Caco-2 (cell line): ENCODE measurements at regions of chr20 and their contacts with region 1.

Region 1: DNA sequence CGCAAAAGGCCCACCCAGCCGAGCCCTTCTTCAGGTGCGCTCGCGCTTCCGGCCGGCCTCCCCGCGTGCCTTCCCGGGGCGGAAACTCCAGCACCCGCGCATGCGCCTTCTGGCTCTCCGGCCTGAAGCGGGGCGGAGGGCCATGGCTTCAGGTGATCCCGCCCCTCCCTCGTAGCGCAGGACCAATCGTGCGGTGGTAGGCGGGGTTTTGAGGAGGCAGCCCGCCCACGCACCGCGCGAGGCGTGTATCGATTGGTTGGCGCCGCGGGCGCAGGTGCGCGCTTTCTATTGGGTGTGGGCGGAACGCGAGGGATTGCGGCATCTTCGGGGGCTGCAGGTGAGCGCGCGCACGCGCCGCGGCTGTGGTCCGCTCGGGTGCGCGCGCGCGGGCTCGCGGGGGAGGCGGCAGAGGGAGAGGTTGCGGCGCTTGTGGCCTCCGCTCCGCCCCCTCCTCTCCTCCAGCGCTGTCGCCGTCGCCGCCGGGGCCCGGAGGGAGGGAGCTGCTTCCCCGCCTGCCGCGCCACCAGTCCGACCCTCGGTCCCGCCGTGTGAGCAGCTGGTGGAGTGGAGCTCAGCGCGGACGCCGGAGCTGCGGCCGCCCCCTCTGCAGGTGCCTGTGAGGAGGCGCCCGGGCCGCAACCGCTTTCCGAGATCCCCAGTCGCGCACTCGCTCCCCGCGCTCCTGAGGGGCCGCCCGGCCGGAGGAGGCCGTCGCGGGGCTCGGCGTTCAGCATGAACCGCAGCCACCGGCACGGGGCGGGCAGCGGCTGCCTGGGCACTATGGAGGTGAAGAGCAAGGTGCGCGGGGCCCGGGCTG is at the start of gene PARD6B:
- DNase-seq: peak; percentile 100
- H3K4me3 ChIP-seq: peak within 1 kb of the TSS; percentile 78
- H3K4me3 Mint-ChIP-seq: peak within 1 kb of the TSS; percentile 88
- H3K27ac Mint-ChIP-seq: peak within 1 kb of the TSS; percentile 96
- H3K4me1 ChIP-seq: peaks cover 67% of the 10 kb centered on the region
- H3K4me1 Mint-ChIP-seq: peaks cover 46% of the 10 kb centered on the region
- H3K27me3 ChIP-seq: no peaks in the 10 kb centered on the region
- H3K27me3 Mint-ChIP-seq: no peaks in the 10 kb centered on the region
- CTCF ChIP-seq: peak in 1 of 2 experiments; percentile 19
- total RNA-seq, gene PARD6B: 153 and 156 TPM in 2 replicates

Region 2: DNA sequence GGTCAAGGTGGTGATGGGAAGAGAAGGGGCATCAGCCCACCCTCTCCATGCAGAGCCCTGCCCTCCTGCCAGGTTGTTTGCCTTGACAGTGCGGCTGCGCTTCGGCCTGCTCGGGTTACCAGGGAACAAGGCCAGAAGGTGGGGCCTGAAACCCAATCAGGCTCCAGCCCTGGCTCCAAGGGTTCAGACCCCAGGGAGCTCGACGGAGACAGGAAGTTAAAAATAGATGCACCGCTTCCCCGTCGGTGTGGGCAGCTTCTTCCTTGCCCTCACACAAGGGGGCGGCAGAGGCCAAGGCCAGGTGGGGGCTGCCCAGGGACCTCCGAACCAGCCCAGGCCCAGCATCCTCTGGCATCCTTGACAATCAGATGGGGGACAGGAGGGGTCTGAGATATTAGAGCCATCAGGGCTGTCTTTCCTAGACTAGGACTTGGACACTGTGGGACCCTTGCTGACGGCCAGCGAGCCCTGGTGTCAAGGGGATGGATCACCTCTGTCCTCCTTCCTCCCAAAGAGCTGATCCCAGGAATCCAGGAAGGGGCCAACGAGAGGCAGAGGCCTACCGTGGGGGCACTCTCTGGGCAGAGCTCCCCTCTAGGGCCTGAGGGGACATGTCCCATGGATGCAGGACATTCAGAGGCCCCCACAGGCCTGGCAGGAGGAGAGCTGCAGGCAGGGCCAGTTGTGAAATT is 105.1 kb before region 1 on chr20:
- CTCF ChIA-PET with region 1: interaction called, 4 read pairs
- POLR2A ChIA-PET with region 1: interaction called, 10 read pairs
- intact Hi-C with region 1: no loop called
- DNase-seq: peak; percentile 85 to 91
- H3K4me3 ChIP-seq: no peak overlapping the region
- H3K4me3 Mint-ChIP-seq: no peak overlapping the region
- H3K27ac Mint-ChIP-seq: peak overlapping the region; percentile 23
- H3K4me1 ChIP-seq: peaks cover 41% of the 10 kb centered on the region
- H3K4me1 Mint-ChIP-seq: peaks cover 12% of the 10 kb centered on the region
- H3K27me3 ChIP-seq: no peaks in the 10 kb centered on the region
- H3K27me3 Mint-ChIP-seq: no peaks in the 10 kb centered on the region
- CTCF ChIP-seq: peak; percentile 96 to 97

Region 3: GRCh38 chr20:50670126-50670862 is 61.0 kb before region 1 on chr20:
- CTCF ChIA-PET with region 1: interaction called, 14 read pairs
- POLR2A ChIA-PET with region 1: interaction called, 36 read pairs
- intact Hi-C with region 1: no loop called
- DNase-seq: peak; percentile 86 to 89
- H3K4me3 ChIP-seq: no peak overlapping the region
- H3K4me3 Mint-ChIP-seq: no peak overlapping the region
- H3K27ac Mint-ChIP-seq: peak overlapping the region; percentile 71
- H3K4me1 ChIP-seq: peaks cover 82% of the 10 kb centered on the region
- H3K4me1 Mint-ChIP-seq: peaks cover 76% of the 10 kb centered on the region
- H3K27me3 ChIP-seq: no peaks in the 10 kb centered on the region
- H3K27me3 Mint-ChIP-seq: no peaks in the 10 kb centered on the region
- CTCF ChIP-seq: no peak

Region 4: GRCh38 chr20:50686821-50687494 is 44.3 kb before region 1 on chr20:
- CTCF ChIA-PET with region 1: no interaction called
- POLR2A ChIA-PET with region 1: no interaction called
- intact Hi-C with region 1: no loop called
- DNase-seq: no peak
- H3K4me3 ChIP-seq: no peak overlapping the region
- H3K4me3 Mint-ChIP-seq: no peak overlapping the region
- H3K27ac Mint-ChIP-seq: peak overlapping the region; percentile 14
- H3K4me1 ChIP-seq: peaks cover 18% of the 10 kb centered on the region
- H3K4me1 Mint-ChIP-seq: peaks cover 18% of the 10 kb centered on the region
- H3K27me3 ChIP-seq: no peaks in the 10 kb centered on the region
- H3K27me3 Mint-ChIP-seq: no peaks in the 10 kb centered on the region
- CTCF ChIP-seq: no peak

Region 5: DNA sequence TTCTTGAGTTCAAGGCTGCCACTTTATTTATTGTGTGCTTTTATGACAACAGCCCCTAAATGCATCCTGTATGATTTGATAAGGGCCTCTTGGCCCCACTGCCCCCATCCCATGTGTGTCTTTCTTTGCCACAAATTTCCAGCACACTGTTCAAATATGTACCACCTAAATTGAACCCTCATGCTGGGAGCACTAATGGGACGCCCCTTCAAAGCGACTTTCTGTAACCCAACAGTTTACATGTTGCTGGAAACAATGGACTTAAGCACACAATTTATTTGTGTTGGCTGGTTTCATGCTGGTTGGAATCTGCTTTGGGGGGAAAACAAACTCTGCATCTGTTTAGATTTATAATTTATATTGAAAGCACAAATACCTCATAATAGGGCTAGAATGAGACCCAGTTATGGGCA is 29.7 kb before region 1 on chr20:
- CTCF ChIA-PET with region 1: interaction called, 3 read pairs
- POLR2A ChIA-PET with region 1: interaction called, 3 read pairs
- intact Hi-C with region 1: loop called (anchors 1 kb)
- DNase-seq: no peak
- H3K4me3 ChIP-seq: no peak overlapping the region
- H3K4me3 Mint-ChIP-seq: no peak overlapping the region
- H3K27ac Mint-ChIP-seq: peak overlapping the region; percentile 88
- H3K4me1 ChIP-seq: peaks cover 41% of the 10 kb centered on the region
- H3K4me1 Mint-ChIP-seq: peaks cover 46% of the 10 kb centered on the region
- H3K27me3 ChIP-seq: no peaks in the 10 kb centered on the region
- H3K27me3 Mint-ChIP-seq: no peaks in the 10 kb centered on the region
- CTCF ChIP-seq: no peak

Region 6: GRCh38 chr20:50762435-50763201 is 31.4 kb after region 1 on chr20:
- CTCF ChIA-PET with region 1: interaction called, 3 read pairs
- POLR2A ChIA-PET with region 1: interaction called, 5 read pairs
- intact Hi-C with region 1: loop called (anchors 1 kb)
- DNase-seq: peak; percentile 54 to 72
- H3K4me3 ChIP-seq: no peak overlapping the region
- H3K4me3 Mint-ChIP-seq: peak overlapping the region; percentile 78
- H3K27ac Mint-ChIP-seq: peak overlapping the region; percentile 100
- H3K4me1 ChIP-seq: peaks cover 87% of the 10 kb centered on the region
- H3K4me1 Mint-ChIP-seq: peaks cover 82% of the 10 kb centered on the region
- H3K27me3 ChIP-seq: no peaks in the 10 kb centered on the region
- H3K27me3 Mint-ChIP-seq: no peaks in the 10 kb centered on the region
- CTCF ChIP-seq: no peak

Region 7: DNA sequence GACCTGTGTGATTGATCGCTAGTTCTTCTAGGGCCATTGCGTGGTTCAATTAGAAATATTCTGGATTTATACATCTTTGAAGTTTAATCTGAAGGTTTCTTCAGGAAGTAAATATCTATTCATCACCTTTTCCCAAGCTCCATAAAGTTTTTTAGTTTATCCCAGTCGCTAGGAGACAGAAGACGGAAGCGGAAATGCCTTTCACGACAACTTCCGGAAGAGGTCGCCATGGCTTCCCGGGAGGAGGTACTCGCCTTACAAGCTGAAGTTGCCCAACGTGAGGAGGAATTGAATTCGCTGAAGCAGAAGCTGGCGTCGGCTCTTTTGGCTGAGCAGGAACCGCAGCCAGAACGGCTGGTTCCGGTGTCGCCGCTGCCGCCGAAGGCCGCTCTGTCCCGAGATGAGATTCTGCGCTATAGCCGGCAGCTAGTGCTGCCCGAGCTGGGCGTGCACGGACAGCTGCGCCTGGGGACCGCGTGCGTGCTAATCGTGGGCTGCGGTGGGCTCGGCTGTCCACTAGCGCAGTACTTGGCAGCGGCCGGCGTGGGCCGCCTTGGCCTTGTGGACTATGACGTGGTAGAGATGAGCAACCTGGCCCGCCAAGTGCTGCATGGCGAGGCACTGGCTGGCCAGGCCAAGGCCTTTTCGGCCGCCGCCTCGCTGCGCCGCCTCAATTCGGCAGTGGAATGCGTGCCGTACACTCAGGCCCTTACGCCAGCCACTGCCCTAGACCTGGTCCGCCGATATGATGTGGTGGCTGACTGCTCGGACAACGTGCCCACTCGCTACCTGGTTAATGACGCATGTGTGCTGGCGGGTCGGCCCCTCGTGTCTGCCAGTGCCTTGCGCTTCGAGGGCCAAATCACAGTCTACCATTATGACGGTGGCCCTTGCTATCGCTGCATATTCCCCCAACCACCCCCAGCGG is 227.6 kb after region 1 on chr20 and contains the start of gene MOCS3:
- CTCF ChIA-PET with region 1: no interaction called
- POLR2A ChIA-PET with region 1: interaction called, 11 read pairs
- intact Hi-C with region 1: no loop called
- DNase-seq: peak; percentile 94 to 96
- H3K4me3 ChIP-seq: peak within 1 kb of the TSS; percentile 91
- H3K4me3 Mint-ChIP-seq: peak within 1 kb of the TSS; percentile 92
- H3K27ac Mint-ChIP-seq: peak within 1 kb of the TSS; percentile 97
- H3K4me1 ChIP-seq: peaks cover 16% of the 10 kb centered on the region
- H3K4me1 Mint-ChIP-seq: peaks cover 22% of the 10 kb centered on the region
- H3K27me3 ChIP-seq: no peaks in the 10 kb centered on the region
- H3K27me3 Mint-ChIP-seq: no peaks in the 10 kb centered on the region
- CTCF ChIP-seq: peak in 1 of 2 experiments; percentile 37
- total RNA-seq, gene MOCS3: 12.9 and 13.2 TPM in 2 replicates

Region 8: GRCh38 chr20:51095633-51096513 is 364.6 kb after region 1 on chr20:
- CTCF ChIA-PET with region 1: no interaction called
- POLR2A ChIA-PET with region 1: no interaction called
- intact Hi-C with region 1: no loop called
- DNase-seq: no peak
- H3K4me3 ChIP-seq: no peak overlapping the region
- H3K4me3 Mint-ChIP-seq: no peak overlapping the region
- H3K27ac Mint-ChIP-seq: no peak overlapping the region
- H3K4me1 ChIP-seq: peaks cover 21% of the 10 kb centered on the region
- H3K4me1 Mint-ChIP-seq: no peaks in the 10 kb centered on the region
- H3K27me3 ChIP-seq: peaks cover under 1% of the 10 kb centered on the region; the same call in 1 of the 2 replicates
- H3K27me3 Mint-ChIP-seq: peaks cover 17% of the 10 kb centered on the region
- CTCF ChIP-seq: no peak